SK-N-SH (cell line): ENCODE measurements at regions of chr3 and their contacts with region 1.

Region 1: DNA sequence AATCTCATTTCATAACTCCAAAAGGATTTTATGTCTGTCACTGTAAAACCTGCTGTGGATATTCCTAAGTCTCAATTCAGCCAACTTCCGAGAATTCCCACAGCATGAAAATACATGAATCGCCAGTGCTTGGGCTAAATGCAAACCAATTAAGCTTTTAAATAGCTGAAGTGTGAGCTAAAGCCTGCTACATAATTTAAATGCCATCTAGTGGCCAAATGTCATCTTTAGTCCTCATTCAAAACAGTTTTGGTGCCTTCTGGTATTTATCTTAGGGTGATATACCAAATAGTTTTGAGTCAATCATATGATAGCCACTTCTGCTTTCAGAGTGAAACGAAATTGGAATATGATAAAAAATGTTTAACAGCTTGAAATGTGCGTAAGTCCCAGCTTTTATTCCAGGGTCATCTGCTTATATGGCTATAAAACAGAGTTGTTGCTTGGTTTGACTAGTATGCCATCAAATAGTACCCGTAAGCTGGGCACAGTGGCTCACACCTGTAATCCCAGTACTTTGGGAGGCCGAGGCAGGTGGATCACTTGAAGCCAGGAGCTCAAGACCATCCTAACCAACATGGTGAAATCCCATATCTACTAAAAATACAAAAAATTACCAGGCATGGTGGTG is 41.8 kb upstream of the CCNL1 start:
- DNase-seq: peak; percentile 36
- H3K4me3 ChIP-seq: no peak overlapping the region; a peak in 1 of 4 replicates
- H3K27ac ChIP-seq: no peak overlapping the region
- H3K4me1 ChIP-seq: peaks cover 6 to 13% of the 10 kb centered on the region in 2 experiments; a peak in 3 of 4 replicates
- H3K27me3 ChIP-seq: no peaks in the 10 kb centered on the region
- CTCF ChIP-seq: peak; percentile 67
- EP300 ChIP-seq: no peak
- RAD21 ChIP-seq: peak; percentile 65

Region 2: GRCh38 chr3:157220211-157220610 is 18.4 kb after region 1 on chr3:
- CTCF ChIA-PET with region 1: interaction called, 11 read pairs
- POLR2A ChIA-PET with region 1: no interaction called
- DNase-seq: no peak
- H3K4me3 ChIP-seq: no peak overlapping the region
- H3K27ac ChIP-seq: no peak overlapping the region
- H3K4me1 ChIP-seq: no peaks in the 10 kb centered on the region
- H3K27me3 ChIP-seq: no peaks in the 10 kb centered on the region
- CTCF ChIP-seq: no peak
- EP300 ChIP-seq: no peak
- RAD21 ChIP-seq: no peak

Region 3: DNA sequence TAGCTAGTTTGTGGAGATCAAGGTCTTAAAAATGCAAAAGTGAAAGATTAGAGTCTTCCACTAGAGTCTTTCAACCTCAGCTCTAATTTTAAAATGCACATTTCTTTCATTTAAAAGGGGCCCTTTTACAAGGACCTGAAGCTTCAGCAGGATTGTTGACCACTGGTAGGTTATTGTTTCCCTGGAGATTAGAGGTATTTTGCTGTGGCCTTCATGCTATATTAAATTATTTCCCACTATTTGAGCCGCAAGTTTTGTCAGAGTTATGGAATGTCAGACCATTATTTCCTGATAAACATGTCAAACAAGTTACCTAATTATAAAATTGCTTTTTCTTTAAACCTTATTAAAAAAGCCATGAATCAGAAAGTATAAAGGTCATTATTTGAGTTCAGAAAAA is 61.3 kb after region 1 on chr3:
- CTCF ChIA-PET with region 1: no interaction called
- POLR2A ChIA-PET with region 1: no interaction called
- DNase-seq: no peak
- H3K4me3 ChIP-seq: no peak overlapping the region
- H3K27ac ChIP-seq: peak overlapping the region in 1 of 2 experiments; percentile 62; a peak in 3 of 4 replicates
- H3K4me1 ChIP-seq: no peaks in the 10 kb centered on the region
- H3K27me3 ChIP-seq: no peaks in the 10 kb centered on the region
- CTCF ChIP-seq: no peak
- EP300 ChIP-seq: no peak
- RAD21 ChIP-seq: no peak

Region 4: DNA sequence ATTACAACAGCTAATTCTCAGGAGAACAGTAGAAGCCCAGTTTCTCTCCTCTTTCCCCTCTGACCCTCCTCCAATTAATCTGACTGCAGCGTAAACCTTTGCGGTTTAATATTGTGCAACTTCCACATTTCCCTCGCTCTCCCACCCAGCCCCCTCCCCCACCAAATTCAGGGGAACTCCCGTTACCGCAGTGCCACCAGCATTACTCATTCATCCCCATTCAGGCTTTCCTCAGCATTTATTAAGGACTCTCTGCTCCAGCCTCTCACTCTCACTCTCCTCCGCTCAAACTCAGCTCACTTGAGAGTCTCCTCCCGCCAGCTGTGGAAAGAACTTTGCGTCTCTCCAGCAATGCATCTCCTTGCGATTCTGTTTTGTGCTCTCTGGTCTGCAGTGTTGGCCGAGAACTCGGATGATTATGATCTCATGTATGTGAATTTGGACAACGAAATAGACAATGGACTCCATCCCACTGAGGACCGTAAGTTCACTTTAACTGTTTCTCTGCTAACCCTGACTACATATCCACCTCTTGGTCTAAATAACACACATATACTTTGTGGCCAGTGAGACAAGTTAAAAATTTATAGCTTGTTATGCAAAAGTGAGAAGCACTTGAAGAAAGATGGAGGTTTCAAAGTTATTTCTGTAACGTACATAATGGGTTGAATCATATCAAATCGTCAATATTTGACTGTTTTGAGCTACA is 235.0 kb after region 1 on chr3 and contains the start of gene PTX3:
- CTCF ChIA-PET with region 1: interaction called, 19 read pairs
- POLR2A ChIA-PET with region 1: no interaction called
- DNase-seq: peak; percentile 8
- H3K4me3 ChIP-seq: peak within 1 kb of the TSS; percentile 51 to 68
- H3K27ac ChIP-seq: peak within 1 kb of the TSS; percentile 50 to 82
- H3K4me1 ChIP-seq: peaks cover 5 to 14% of the 10 kb centered on the region in 2 experiments; a peak in 3 of 4 replicates
- H3K27me3 ChIP-seq: no peaks in the 10 kb centered on the region
- CTCF ChIP-seq: no peak
- EP300 ChIP-seq: no peak
- RAD21 ChIP-seq: no peak
- polyA plus RNA-seq, gene PTX3: 208 and 248 TPM in 2 replicates

Region 5: DNA sequence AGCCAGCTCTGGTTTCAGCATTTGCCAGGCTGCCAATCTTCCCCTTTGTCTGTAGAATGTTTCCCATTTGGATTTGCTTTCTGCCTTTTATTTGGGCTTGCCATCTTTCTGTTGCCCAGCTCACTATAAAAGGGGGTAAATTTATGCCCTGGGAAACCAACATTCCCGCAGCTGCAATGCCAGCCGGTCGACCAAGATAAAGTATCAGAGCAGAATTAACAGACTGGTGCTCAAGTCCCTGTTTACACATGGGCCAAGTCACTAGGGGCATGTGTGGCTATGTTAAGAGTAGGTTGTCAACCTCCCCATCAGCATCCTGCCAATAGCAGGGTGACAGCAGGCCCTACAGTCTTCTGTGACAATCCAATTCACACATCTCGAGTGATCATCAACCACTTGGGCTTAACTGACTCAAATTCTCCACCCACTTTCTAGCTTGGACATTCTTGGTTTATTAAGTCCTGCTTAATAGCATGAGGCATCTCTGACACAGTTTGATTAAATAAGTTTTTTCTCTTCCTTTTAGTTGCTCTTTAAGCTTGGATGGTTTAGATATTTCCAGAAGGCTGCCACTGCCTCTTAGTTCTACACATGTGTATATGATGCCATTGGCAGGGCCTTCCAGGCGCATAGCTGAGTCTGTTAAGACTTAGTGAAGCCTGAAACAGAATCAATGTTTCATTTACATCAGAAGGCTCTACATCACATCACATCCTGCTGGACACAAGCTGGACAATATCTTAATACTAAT is 325.5 kb after region 1 on chr3:
- CTCF ChIA-PET with region 1: interaction called, 20 read pairs
- POLR2A ChIA-PET with region 1: no interaction called
- DNase-seq: no peak
- H3K4me3 ChIP-seq: no peak overlapping the region
- H3K27ac ChIP-seq: peak overlapping the region in 1 of 2 experiments; percentile 44; a peak in 2 of 4 replicates
- H3K4me1 ChIP-seq: peaks cover 6 to 33% of the 10 kb centered on the region in 2 experiments; a peak in 3 of 4 replicates
- H3K27me3 ChIP-seq: no peaks in the 10 kb centered on the region
- CTCF ChIP-seq: no peak
- EP300 ChIP-seq: no peak
- RAD21 ChIP-seq: no peak

Region 6: DNA sequence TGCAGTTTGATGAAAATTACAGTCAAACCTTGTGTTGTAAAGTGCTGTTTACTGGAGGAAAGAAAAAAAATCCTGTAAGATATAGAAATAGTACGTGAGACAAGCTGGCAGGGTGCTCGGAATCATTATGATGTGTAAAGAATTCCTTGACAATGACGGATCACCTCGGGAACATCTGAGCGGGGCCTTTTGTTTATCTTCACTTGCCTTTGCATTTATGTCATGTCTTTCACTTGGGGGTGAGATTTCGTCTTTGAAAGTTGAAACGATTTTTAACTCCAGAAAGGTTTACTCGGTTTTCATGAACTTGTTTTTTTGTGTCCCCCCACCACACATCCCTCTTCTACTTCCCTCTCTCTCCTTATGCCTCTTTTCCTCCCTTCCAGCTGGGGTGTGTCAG is 429.7 kb after region 1 on chr3:
- CTCF ChIA-PET with region 1: no interaction called
- POLR2A ChIA-PET with region 1: no interaction called
- DNase-seq: no peak
- H3K4me3 ChIP-seq: no peak overlapping the region
- H3K27ac ChIP-seq: peak overlapping the region in 1 of 2 experiments; percentile 51; a peak in 2 of 4 replicates
- H3K4me1 ChIP-seq: peaks cover 0 to 15% of the 10 kb centered on the region in 2 experiments; a peak in 2 of 4 replicates
- H3K27me3 ChIP-seq: no peaks in the 10 kb centered on the region
- CTCF ChIP-seq: no peak
- EP300 ChIP-seq: no peak
- RAD21 ChIP-seq: no peak